GM18951 (cell line): ENCODE measurements at regions of chrX and their contacts with region 1.

Region 1: DNA sequence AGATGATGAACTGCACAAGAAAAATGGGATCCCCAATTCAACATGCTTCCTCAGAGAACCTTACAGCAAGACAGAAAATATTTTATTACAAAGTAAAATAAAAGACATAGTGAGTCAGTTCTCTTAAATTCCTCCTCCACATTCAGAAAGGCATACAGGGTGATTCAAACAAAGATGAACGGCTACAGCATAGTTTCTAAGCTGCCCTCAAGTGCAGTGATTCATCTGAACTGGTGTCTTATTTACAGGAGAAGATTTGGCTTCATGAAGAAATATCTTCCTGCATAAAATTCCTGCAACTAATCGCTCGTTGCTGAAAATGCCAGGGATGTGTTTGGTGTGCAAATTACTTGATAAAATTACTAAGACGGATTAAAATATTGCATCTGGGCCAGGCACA is 103.6 kb downstream of the PRKX start:
- POLR2A ChIP-seq: no peak

Region 2: DNA sequence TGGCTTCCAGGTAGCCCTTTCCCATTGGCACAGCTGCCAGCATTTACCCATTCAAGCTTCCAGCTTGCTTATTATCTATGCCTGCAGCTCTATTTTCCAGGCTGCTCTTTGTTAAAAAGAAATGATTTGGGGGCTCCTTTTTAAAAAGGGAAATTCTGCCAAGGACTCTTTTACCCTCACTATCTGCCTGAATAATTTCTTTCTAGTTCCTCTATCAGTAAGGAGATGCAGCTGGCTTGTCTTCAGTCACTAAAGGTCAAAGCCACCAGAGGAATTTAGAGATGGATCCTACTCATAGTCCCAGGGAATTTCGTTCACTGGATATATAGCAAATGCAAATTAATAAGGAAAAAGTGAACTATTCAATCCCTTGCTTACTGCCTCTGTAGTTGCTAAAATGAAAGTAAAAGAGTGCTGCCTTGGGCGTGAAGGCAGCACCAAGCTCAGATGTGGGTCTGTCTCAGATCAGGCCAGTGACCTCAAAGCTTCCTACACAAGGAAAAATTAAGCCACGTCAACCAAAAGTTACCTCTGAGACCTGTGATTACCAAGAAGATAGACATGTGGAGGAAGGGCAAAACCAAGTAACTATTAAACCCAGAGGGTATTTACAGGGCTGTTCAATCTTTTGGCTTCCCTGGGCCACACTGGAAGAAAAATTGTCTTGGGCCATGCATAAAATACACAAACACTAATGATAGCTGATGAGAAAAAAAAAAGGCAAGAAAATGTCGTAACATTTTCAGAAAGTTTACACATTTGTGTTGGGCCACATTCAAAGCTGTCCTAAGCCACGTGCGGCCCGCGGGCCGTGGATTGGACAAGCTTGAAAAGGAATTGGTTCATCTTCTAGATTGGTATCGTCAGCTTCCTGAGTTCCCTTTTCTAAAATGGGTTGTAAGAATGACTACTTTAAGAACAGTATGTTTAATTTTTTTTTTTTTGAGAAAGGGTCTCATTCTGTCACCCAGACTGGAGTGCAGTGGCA is 563.3 kb before region 1 on chrX:
- in situ Hi-C with region 1: loop called (anchors 25 kb)
- POLR2A ChIP-seq: no peak

Region 3: GRCh38 chrX:3076416-3076991 is 533.3 kb before region 1 on chrX:
- in situ Hi-C with region 1: no loop called
- POLR2A ChIP-seq: no peak